ENCODE measurements at regions of chr6 and their contacts with region 1.

Region 1: GRCh38 chr6:11711003-11711983 is 67.3 kb downstream of the ADTRP start:
- DNase-seq: peak; percentile 30
- H3K4me3 Mint-ChIP-seq: peak overlapping the region; percentile 76
- H3K27ac Mint-ChIP-seq: peak overlapping the region; percentile 97
- H3K4me1 Mint-ChIP-seq: peaks cover 73% of the 10 kb centered on the region
- H3K27me3 Mint-ChIP-seq: no peaks in the 10 kb centered on the region

Region 2: GRCh38 chr6:10837995-10838793 is 873.1 kb before region 1 on chr6 and contains the start of gene MAK:
- intact Hi-C with region 1: loop called (anchors 2 kb)
- DNase-seq: peak; percentile 88
- H3K4me3 Mint-ChIP-seq: peak within 1 kb of the TSS; percentile 85
- H3K27ac Mint-ChIP-seq: peak within 1 kb of the TSS; percentile 99
- H3K4me1 Mint-ChIP-seq: peaks cover 23% of the 10 kb centered on the region
- H3K27me3 Mint-ChIP-seq: peaks cover 32% of the 10 kb centered on the region
- total RNA-seq, gene MAK: 0.67 and 0.73 TPM in 2 replicates

Region 3: DNA sequence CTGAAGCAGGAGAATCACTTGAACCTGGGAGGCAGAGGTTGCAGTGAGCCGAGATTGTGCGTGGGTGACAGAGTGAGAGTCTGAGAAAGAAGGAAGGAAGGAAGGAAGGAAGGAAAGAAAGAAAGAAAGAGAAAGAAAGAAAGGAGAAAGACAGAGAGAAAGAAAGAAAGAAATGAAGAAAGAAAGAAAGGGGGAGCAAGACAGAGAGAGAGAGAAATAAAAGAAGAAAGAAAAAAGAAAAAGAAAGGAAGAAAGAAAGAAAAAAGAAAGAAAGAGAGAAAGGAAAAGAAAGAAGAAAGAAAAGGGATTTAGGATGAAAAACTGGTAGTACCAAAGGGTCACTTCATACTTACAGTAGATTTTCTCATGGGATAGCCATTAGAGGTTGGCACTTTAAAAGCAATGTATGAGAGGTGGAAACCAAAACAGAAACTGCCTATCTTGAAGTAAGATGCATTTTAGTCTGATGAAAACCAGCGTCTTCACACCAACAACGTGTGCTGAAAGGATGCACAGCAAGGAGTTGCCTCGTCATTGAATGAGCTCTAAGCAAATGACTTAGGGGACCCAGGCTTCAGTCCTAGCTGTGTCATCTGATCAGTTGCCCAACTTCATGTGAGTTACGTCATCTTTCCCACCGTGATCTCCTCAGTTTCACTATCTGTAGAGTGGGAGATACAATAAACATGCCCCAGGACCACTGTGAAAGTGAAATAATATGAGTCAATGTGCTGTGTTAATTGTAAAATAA is 344.9 kb before region 1 on chr6:
- intact Hi-C with region 1: loop called (anchors 5 kb)
- DNase-seq: peak; percentile 60
- H3K4me3 Mint-ChIP-seq: peak overlapping the region; percentile 55
- H3K27ac Mint-ChIP-seq: peak overlapping the region; percentile 92
- H3K4me1 Mint-ChIP-seq: peaks cover 95% of the 10 kb centered on the region
- H3K27me3 Mint-ChIP-seq: no peaks in the 10 kb centered on the region

Region 4: DNA sequence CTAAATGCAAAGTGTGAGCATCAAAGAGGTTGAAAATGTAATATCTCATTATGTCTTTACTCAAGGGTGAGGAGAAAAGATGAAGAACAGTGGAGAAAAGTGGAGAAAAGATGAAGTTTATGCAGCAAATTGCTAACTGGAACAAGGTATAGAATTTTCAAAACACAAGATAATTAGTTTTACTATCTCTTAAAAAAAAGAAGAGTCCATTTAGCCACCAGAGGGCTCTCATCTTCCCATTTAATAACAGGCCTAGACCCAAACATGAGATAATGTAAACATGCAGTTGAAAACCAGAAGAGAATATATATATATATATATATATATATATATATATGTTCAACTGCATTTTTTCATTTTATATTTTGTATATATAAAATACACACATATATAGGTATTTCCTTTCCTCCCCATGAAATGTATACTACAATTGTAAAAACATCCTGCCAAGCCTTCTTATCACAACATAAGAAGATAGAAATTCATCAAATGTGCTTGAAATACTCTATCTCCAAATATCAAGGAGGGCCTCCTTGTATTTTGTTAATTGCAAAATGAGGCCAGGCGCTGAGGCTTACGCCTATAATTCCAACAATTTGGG is 11.1 kb before region 1 on chr6:
- intact Hi-C with region 1: loop called (anchors 1 kb)
- DNase-seq: no peak
- H3K4me3 Mint-ChIP-seq: no peak overlapping the region
- H3K27ac Mint-ChIP-seq: peak overlapping the region; percentile 37
- H3K4me1 Mint-ChIP-seq: peaks cover 26% of the 10 kb centered on the region
- H3K27me3 Mint-ChIP-seq: no peaks in the 10 kb centered on the region

Region 5: DNA sequence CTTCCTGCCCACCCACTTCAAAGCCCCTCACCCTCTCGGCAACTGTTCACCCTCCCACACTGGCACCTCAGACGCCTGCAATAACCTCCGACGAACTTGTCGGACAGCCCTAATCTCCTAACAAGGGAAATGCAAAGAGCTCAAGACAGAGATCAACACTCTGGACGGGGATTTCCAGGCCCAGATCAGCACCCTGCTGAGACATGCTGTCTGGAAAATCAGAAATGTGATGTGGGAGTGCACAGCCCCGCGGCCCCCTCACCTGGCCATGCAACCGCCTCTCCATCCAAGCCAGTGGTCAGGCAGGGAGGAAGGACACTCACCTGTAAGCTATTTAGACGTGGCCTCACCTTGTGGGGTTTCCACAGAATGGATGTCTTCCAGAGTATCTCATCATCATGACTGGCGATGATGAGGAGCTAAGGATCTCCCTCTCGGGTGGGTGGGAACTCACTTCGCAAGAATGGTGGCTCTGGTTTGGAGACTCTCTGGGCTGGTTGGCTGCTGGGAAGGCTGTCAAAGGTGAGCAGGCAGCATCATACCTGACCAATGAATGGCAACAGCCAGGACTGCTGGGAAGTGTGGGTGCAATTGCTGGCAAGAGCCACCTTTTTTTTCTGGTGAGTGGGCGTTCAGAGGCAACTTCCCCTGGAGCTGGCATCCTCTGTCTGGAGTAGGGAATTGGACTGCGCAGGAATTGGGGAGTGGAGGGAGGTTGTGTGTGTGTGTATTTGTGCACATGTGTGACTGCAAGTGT is 95.4 kb after region 1 on chr6:
- intact Hi-C with region 1: loop called (anchors 2 kb)
- DNase-seq: peak; percentile 3
- H3K4me3 Mint-ChIP-seq: peak overlapping the region; percentile 34
- H3K27ac Mint-ChIP-seq: peak overlapping the region; percentile 82
- H3K4me1 Mint-ChIP-seq: peaks cover 53% of the 10 kb centered on the region
- H3K27me3 Mint-ChIP-seq: no peaks in the 10 kb centered on the region

Region 6: DNA sequence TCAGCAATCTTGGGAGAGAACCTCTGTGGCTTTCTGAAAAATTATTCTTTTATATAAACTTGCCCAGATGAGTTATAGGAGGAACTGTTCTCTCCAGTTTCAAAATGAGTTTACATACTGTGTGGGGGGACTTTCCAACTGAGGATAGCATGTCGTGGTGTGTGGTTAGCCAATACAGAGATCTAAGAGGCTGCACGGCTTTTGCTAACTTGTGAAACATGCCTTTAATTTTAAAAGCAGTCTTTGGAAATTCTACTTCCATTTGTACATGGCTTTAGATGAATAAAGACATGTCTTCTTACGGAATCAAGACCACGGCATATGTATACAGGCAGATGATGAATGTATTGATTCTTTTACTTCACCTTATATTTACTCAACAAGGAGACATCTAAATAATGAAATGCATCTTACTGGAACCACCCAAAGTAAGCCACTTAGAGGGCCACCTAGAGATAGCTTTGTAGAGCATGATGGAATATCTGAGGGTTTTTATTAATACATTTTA is 340.6 kb after region 1 on chr6:
- intact Hi-C with region 1: loop called (anchors 1 kb)
- DNase-seq: peak; percentile 76
- H3K4me3 Mint-ChIP-seq: peak overlapping the region; percentile 78
- H3K27ac Mint-ChIP-seq: peak overlapping the region; percentile 96
- H3K4me1 Mint-ChIP-seq: peaks cover 77% of the 10 kb centered on the region
- H3K27me3 Mint-ChIP-seq: no peaks in the 10 kb centered on the region

Region 7: GRCh38 chr6:13427801-13428582 is 1716.7 kb after region 1 on chr6:
- intact Hi-C with region 1: loop called (anchors 5 kb)
- DNase-seq: peak; percentile 57
- H3K4me3 Mint-ChIP-seq: peak overlapping the region; percentile 54
- H3K27ac Mint-ChIP-seq: peak overlapping the region; percentile 95
- H3K4me1 Mint-ChIP-seq: peaks cover 78% of the 10 kb centered on the region
- H3K27me3 Mint-ChIP-seq: no peaks in the 10 kb centered on the region

Measured in activated T-helper 1 cell treated with anti-CD3 and anti-CD28 coated beads, Interleukin-12 subunit alpha, Interleukin-12 subunit beta, Interleukin-2, Interleukin-4 antibody, amounts not matched to agents 30 ng/mL and 10 ng/mL and 1 ng/mL, durations not matched to agents 14 hours and 24 hours and 36 hours (primary cell).